ENCODE measurements at regions of chr11 and their contacts with region 1.

Region 1: GRCh38 chr11:18321980-18322711 is at the starts of genes GTF2H1 and HPS5:
- DNase-seq: peak; percentile 96 to 99
- H3K4me3 ChIP-seq: peak within 1 kb of the TSS; percentile 87
- H3K4me3 Mint-ChIP-seq: peak within 1 kb of the TSS; percentile 84
- H3K27ac Mint-ChIP-seq: peak within 1 kb of the TSS; percentile 100
- H3K4me1 ChIP-seq: peaks cover 19% of the 10 kb centered on the region
- H3K4me1 Mint-ChIP-seq: peaks cover 30% of the 10 kb centered on the region
- H3K27me3 ChIP-seq: no peaks in the 10 kb centered on the region
- H3K27me3 Mint-ChIP-seq: no peaks in the 10 kb centered on the region
- CTCF ChIP-seq: peak in 1 of 2 experiments; percentile 1
- total RNA-seq, gene GTF2H1: 63.0 and 72.0 TPM in 2 replicates
- total RNA-seq, gene HPS5: 17.5 TPM in 2 replicates

Region 2: DNA sequence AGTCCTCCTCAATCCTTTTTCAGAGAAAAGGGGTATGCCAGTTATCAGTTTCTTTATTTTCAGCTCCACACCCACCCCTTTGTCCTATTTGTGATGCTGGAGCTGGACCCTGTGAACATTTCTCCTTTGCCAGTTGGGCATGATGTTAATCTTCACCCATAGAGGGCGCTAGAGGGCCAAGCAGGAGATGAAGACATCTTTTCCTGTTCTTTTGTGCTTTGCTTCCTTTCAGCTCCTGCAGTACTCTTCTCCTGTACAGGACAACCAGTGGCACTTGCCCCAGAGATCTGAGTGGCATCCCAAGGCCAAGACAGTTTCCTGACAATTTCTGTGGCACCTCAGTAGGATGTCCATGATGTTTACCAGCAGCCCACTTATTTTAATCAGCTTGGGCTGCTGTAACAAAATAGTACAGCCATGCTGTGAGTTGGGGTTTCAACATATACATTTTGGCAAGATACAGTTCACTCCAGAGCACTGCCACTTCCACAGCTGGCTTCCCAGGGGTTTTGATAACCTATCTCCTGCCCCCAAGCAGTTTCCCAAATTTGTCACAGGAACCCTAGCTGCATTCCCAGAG is 78.3 kb before region 1 on chr11:
- CTCF ChIA-PET with region 1: no interaction called
- POLR2A ChIA-PET with region 1: no interaction called
- intact Hi-C with region 1: loop called (anchors 5 kb)
- DNase-seq: peak; percentile 67 to 81
- H3K4me3 ChIP-seq: no peak overlapping the region
- H3K4me3 Mint-ChIP-seq: no peak overlapping the region
- H3K27ac Mint-ChIP-seq: no peak overlapping the region
- H3K4me1 ChIP-seq: no peaks in the 10 kb centered on the region
- H3K4me1 Mint-ChIP-seq: no peaks in the 10 kb centered on the region
- H3K27me3 ChIP-seq: no peaks in the 10 kb centered on the region
- H3K27me3 Mint-ChIP-seq: peaks cover 9% of the 10 kb centered on the region
- CTCF ChIP-seq: peak; percentile 85 to 89

Region 3: DNA sequence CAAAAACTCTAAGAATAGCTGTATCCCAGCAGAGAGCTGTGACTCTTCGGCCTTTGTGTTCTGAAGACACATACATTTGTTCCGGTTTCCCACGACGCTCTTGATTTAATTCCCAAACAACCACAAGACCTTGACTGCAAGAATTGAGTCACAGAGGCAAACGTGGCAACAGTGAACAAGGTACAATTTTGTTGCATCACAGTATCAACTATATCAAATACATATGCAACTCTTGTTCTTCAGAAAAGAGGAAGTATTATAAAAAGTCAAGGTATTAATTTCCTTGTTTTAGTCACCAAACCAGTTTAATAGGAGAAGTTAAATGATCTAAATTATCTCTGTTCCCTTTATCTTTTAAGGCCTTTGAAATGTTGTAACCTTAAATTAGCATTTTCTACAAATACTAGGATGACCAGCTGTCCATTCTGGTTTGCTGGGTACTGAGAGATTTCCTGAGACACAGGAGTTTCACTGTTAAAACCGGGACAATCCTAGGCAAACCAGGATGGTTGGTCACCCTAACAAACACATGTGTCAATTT is 11.3 kb before region 1 on chr11:
- CTCF ChIA-PET with region 1: interaction called, 3 read pairs
- POLR2A ChIA-PET with region 1: interaction called, 16 read pairs
- intact Hi-C with region 1: loop called (anchors 1 kb)
- DNase-seq: no peak
- H3K4me3 ChIP-seq: no peak overlapping the region
- H3K4me3 Mint-ChIP-seq: no peak overlapping the region
- H3K27ac Mint-ChIP-seq: no peak overlapping the region
- H3K4me1 ChIP-seq: peaks cover 29% of the 10 kb centered on the region
- H3K4me1 Mint-ChIP-seq: peaks cover 17% of the 10 kb centered on the region
- H3K27me3 ChIP-seq: no peaks in the 10 kb centered on the region
- H3K27me3 Mint-ChIP-seq: no peaks in the 10 kb centered on the region
- CTCF ChIP-seq: no peak

Region 4: DNA sequence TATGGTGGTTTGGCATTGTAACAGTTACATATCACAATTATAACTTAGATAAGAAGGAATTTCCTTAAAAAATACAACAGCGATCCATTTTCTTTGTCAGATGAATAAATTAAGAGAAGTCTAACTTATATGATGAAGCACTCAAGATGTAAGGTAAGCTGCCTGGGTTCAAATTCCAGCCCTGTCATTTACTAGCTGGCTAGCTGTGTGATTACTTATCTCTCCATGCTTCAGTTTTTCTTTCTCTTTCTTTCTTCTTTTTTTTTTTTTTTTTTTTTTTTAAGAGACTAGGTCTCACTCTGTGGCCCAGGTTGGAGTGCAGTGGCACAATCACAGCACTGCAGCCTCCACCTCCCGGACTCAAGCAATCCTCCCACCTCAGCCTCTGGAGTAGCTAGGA is 50.1 kb after region 1 on chr11:
- CTCF ChIA-PET with region 1: no interaction called
- POLR2A ChIA-PET with region 1: interaction called, 13 read pairs
- intact Hi-C with region 1: no loop called
- DNase-seq: no peak
- H3K4me3 ChIP-seq: no peak overlapping the region
- H3K4me3 Mint-ChIP-seq: no peak overlapping the region
- H3K27ac Mint-ChIP-seq: no peak overlapping the region
- H3K4me1 ChIP-seq: peaks cover 11% of the 10 kb centered on the region
- H3K4me1 Mint-ChIP-seq: no peaks in the 10 kb centered on the region
- H3K27me3 ChIP-seq: no peaks in the 10 kb centered on the region
- H3K27me3 Mint-ChIP-seq: no peaks in the 10 kb centered on the region
- CTCF ChIP-seq: no peak

Measured in Caco-2 (cell line).